Activated naive CD8-positive, alpha-beta T cell treated with anti-CD3 and anti-CD28 coated beads, Interleukin-2, amount 10 ng/mL, durations not matched to agents 7 days and 5 days (primary cell): ENCODE measurements at regions of chr4 and their contacts with region 1.

Region 1: GRCh38 chr4:99949999-99950912 is at the start of gene H2AZ1:
- DNase-seq: peak; percentile 90
- ATAC-seq: peak; percentile 68
- H3K4me3 Mint-ChIP-seq: no peak within 1 kb of the TSS
- H3K27ac Mint-ChIP-seq: no peak within 1 kb of the TSS
- H3K4me1 Mint-ChIP-seq: peaks cover 26% of the 10 kb centered on the region
- H3K27me3 Mint-ChIP-seq: no peaks in the 10 kb centered on the region
- total RNA-seq, gene H2AZ1: 399 to 400 TPM

Region 2: DNA sequence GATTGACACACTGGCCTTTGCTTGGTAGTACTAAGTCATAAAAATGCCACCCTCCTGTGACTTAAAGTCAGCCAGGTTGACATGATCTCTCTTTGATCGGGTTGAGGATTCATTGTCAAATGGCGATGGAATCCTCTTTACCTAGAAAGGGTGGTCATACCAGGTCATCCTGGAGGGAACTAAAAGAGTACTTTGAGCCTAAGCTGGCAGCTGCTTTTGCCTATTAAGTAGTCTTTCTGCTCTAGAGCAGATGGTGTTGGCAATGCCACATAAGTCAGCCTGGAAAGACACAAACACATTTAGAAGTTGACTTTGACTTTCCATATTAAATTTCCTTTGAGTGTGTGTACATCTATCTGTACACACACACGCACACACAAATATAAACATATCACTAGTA is 253.5 kb before region 1 on chr4:
- POLR2A ChIA-PET with region 1: no interaction called
- DNase-seq: no peak
- ATAC-seq: no peak
- H3K4me3 Mint-ChIP-seq: no peak overlapping the region
- H3K27ac Mint-ChIP-seq: no peak overlapping the region
- H3K4me1 Mint-ChIP-seq: no peaks in the 10 kb centered on the region
- H3K27me3 Mint-ChIP-seq: peaks cover 4% of the 10 kb centered on the region

Region 3: DNA sequence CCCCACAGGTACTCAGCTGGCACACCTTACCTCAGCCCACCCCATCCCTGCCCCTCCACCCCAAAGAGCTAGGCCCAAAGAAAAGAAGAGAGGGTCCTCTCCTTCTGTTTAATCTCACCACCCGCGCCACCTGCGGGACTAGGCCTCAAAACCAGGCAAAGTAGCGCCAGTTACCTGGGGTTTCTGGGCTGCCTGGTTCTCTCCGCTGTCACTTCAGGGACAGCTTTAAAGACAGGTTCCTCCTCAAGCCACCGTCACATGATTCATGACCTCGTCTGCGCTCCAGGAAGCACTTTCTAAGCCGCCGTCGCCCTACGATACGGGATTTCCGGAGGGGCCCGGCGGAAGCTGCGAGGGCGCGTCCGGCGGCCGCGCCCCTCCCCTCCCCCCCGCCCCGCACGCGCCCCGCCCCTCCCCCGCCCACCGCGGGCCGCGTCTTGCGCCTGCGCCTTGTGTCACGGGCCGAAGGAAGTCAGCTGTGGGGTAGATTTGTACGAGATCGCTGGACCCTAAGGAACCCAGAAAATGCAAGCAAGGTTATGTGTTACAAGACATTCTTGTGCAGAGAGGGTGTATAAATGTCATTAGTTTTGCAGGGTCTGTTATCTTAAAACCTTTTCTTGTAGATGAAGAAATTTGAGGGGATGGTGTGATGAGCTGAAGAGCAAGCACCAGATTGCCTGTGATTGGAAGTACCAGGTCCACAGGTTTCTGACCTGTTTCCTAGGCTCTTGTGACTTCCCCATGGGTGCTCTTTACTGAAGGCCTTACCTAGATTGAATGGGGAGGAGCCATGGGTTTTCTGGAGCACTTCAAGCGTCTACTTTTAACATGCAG is 55.9 kb before region 1 on chr4 and contains the start of gene LAMTOR3:
- POLR2A ChIA-PET with region 1: interaction called, 31 read pairs
- DNase-seq: peak; percentile 86
- ATAC-seq: peak; percentile 100
- H3K4me3 Mint-ChIP-seq: peak within 1 kb of the TSS; percentile 97
- H3K27ac Mint-ChIP-seq: peak within 1 kb of the TSS; percentile 97
- H3K4me1 Mint-ChIP-seq: peaks cover 25% of the 10 kb centered on the region
- H3K27me3 Mint-ChIP-seq: no peaks in the 10 kb centered on the region
- total RNA-seq, gene LAMTOR3: 27.4 to 28.3 TPM

Region 4: GRCh38 chr4:99965674-99966350 is 15.6 kb after region 1 on chr4:
- POLR2A ChIA-PET with region 1: interaction called, 11 read pairs
- DNase-seq: no peak
- ATAC-seq: peak; percentile 82
- H3K4me3 Mint-ChIP-seq: peak overlapping the region; percentile 11
- H3K27ac Mint-ChIP-seq: no peak overlapping the region
- H3K4me1 Mint-ChIP-seq: peaks cover 11% of the 10 kb centered on the region
- H3K27me3 Mint-ChIP-seq: peaks cover 7% of the 10 kb centered on the region